Breast epithelium (tissue), 4 donors: ENCODE measurements at regions of chr10 and their contacts with region 1.

Region 1: DNA sequence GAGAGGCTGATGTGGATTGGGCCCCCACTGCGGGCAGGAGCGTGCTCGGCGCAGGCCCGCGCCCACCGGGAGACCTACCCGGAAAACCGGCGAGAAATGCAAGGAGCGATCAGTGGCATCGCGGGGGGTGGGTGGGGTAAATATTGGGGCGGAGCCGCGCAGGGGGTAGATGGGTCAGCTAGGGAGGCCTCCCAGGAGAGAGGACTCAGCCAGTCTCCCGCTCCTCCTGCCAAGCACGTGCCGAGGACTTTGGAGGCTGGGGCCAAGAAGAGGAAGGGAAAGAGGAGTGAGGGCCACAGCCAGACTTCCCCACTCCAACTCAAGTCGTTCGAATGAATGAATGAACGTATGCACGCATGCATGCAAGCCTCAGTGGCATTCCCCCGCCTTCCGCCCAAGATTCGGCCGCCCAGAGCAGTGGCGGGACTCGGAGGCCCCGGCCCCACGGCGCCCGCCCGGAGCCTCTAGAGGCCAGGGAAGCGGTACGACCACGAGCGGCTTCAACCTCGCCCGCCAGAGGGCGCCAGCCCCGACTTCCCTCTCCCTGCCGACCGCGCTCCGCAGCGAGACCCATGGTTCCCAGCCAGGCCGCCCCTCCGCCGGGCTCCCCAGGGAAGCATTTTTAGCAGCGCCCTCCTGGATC is 3.6 kb downstream of the NPM3 start:
- DNase-seq: peak; percentile 41 to 82
- H3K4me3 ChIP-seq: peak overlapping the region; percentile 36 to 60 (median 44)
- H3K27ac ChIP-seq: no peak overlapping the region
- H3K4me1 ChIP-seq: peaks cover 12% of the 10 kb centered on the region in 2 donors
- H3K27me3 ChIP-seq: peaks cover 10 to 45% of the 10 kb centered on the region in 2 donors
- CTCF ChIP-seq: peak in 2 of 3 donors; percentile 69 to 70
- POLR2A ChIP-seq: no peak

Region 2: DNA sequence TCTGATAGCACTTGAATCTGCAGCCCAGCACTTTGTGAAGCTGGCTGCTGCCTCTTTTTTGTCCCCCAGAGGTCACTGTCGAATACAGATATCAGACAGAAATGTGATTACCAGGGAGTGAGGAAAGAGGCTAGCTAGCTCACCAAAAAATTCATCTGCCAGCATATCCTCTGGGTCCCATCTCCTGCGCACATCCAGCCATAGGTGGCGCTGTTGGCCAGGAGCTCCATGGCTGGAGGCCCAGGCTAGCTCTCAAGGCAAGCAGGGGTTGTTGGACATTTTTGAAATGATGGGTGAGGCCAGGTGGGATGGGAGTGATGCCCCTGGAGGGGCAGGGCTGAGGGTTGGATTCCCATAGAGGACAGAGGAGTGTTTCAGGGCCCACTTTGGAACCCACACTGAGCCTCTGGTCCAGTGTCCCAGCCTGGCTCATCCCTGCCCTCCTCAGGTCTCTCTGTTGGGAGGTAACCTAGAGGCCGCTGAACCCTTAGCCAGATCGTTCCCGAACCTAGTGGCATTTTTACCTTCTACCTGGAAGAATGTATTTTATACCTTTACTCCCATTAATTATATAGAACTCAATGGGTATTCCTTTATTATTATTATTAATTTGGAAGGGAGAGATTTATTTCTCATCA is 176.8 kb before region 1 on chr10:
- intact Hi-C with region 1: loop called (anchors 10 kb)
- DNase-seq: peak; percentile 45 to 73
- H3K4me3 ChIP-seq: no peak overlapping the region
- H3K27ac ChIP-seq: no peak overlapping the region
- H3K4me1 ChIP-seq: no peaks in the 10 kb centered on the region
- H3K27me3 ChIP-seq: no peaks in the 10 kb centered on the region
- CTCF ChIP-seq: peak; percentile 38 to 86 (median 77)
- POLR2A ChIP-seq: no peak

Region 3: DNA sequence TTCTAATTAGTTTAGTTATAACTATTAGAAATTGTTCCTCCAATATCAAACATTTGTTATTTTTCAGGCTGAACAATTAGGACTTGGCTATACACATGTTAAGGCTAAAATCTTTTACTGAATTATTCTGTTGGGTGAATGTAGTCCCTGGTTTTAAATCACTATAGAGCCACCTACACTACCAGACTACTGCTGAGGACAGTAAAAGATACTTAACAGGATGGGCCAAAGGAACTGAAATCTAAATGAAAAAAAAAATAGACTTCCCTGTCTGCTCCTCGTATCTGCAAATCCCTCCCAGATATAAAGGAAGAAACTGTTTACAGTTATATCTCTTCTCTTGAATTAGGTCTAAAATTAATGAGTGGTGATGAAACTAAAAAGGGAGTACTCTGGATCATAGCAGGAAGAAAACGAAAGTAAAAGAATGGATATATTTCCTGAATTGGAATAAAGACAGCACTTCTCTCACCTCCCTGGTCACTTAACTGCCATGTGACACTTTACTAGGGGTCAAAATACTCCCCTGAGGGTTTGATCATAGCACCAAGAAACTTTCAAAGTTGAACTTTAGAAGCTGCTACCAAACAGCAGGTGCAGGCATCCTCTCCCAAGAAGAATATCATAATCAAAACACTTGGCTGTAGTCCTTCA is 97.4 kb before region 1 on chr10:
- intact Hi-C with region 1: no loop called
- DNase-seq: no peak
- H3K4me3 ChIP-seq: peak overlapping the region in 2 of 3 donors; percentile 11 to 35
- H3K27ac ChIP-seq: peak overlapping the region; percentile 14 to 18
- H3K4me1 ChIP-seq: no peaks in the 10 kb centered on the region
- H3K27me3 ChIP-seq: no peaks in the 10 kb centered on the region
- CTCF ChIP-seq: no peak
- POLR2A ChIP-seq: no peak

Region 4: GRCh38 chr10:101745074-101745696 is 34.5 kb before region 1 on chr10:
- intact Hi-C with region 1: no loop called
- DNase-seq: no peak
- H3K4me3 ChIP-seq: no peak overlapping the region
- H3K27ac ChIP-seq: no peak overlapping the region
- H3K4me1 ChIP-seq: no peaks in the 10 kb centered on the region
- H3K27me3 ChIP-seq: peaks cover 0 to 5% of the 10 kb centered on the region in 2 donors
- CTCF ChIP-seq: no peak
- POLR2A ChIP-seq: no peak